SK-N-SH (cell line): ENCODE measurements at regions of chr19 and their contacts with region 1.

Region 1: DNA sequence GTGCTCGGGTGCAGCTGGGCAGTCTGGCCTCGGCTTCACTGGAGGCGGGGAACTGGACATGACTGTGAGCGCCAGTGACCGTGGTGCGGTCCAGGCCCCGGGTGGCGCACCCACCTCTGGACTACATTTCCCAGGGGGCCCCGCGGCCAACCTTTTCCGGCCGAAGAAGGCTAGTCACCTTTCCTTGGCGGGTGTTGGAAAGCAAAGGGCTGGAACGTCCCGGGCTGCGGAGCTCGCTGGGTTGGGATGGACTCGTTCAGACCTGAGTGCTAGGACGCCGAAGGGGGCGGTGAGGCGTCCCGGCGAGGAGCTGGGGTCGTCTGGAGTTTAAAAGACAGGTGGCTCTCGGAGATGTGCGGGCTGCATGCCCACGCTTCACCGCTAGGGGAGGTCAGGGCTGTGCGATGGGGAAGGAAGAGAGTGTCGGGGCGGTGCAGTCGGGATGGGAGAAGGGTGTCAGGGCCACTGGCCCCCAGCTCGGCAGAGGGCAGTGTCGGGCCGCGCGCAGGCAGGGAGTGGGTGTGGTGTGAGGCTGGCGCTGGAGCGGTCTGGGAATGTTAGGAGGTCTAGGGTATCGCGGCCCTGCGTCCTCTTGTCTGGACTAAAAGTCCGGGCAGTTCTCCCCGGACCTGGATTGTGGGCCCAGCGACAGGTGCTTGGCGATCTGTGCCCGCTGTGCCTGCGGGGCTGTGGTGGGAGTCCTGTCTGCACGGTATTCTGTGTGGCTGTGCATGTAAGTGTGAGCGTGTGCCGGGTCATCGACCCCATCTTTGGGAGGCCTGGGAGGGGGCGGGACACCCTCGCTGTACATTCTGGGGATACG is 57.1 kb downstream of the ZNF568 start:
- DNase-seq: peak; percentile 97
- H3K4me3 ChIP-seq: peak overlapping the region; percentile 59 to 63; a peak in 3 of 4 replicates
- H3K27ac ChIP-seq: peak overlapping the region in 1 of 2 experiments; percentile 76; a peak in 1 of 4 replicates
- H3K4me1 ChIP-seq: peaks cover 0 to 7% of the 10 kb centered on the region in 2 experiments; a peak in 1 of 4 replicates
- H3K27me3 ChIP-seq: no peaks in the 10 kb centered on the region
- CTCF ChIP-seq: peak; percentile 56
- EP300 ChIP-seq: no peak
- RAD21 ChIP-seq: peak; percentile 84

Region 2: GRCh38 chr19:36819130-36819630 is 154.1 kb before region 1 on chr19:
- CTCF ChIA-PET with region 1: no interaction called
- POLR2A ChIA-PET with region 1: no interaction called
- DNase-seq: no peak
- H3K4me3 ChIP-seq: no peak overlapping the region; a peak in 1 of 4 replicates
- H3K27ac ChIP-seq: no peak overlapping the region
- H3K4me1 ChIP-seq: no peaks in the 10 kb centered on the region
- H3K27me3 ChIP-seq: no peaks in the 10 kb centered on the region
- CTCF ChIP-seq: no peak
- EP300 ChIP-seq: no peak
- RAD21 ChIP-seq: no peak

Region 3: GRCh38 chr19:37217855-37218591 is 244.8 kb after region 1 on chr19 and contains the start of gene ZNF383:
- CTCF ChIA-PET with region 1: interaction called, 15 read pairs
- POLR2A ChIA-PET with region 1: interaction called, 5 read pairs
- DNase-seq: peak; percentile 90
- H3K4me3 ChIP-seq: peak within 1 kb of the TSS; percentile 57 to 100
- H3K27ac ChIP-seq: peak within 1 kb of the TSS; percentile 75 to 97
- H3K4me1 ChIP-seq: peaks cover 0 to 6% of the 10 kb centered on the region in 2 experiments; a peak in 1 of 4 replicates
- H3K27me3 ChIP-seq: no peaks in the 10 kb centered on the region
- CTCF ChIP-seq: no peak
- EP300 ChIP-seq: no peak; a peak in 1 of 4 replicates
- RAD21 ChIP-seq: no peak
- polyA plus RNA-seq, gene ZNF383: 2.0 and 2.8 TPM in 2 replicates

Region 4: GRCh38 chr19:37227996-37228395 is 254.8 kb after region 1 on chr19:
- CTCF ChIA-PET with region 1: interaction called, 18 read pairs
- POLR2A ChIA-PET with region 1: no interaction called
- DNase-seq: peak; percentile 31
- H3K4me3 ChIP-seq: no peak overlapping the region
- H3K27ac ChIP-seq: no peak overlapping the region
- H3K4me1 ChIP-seq: no peaks in the 10 kb centered on the region
- H3K27me3 ChIP-seq: no peaks in the 10 kb centered on the region
- CTCF ChIP-seq: peak; percentile 47
- EP300 ChIP-seq: no peak
- RAD21 ChIP-seq: peak; percentile 66